ENCODE measurements at regions of chr15 and their contacts with region 1.

Region 1: GRCh38 chr15:88586401-88587162 is 34.6 kb upstream of the AEN start:
- DNase-seq: no peak
- H3K4me3 ChIP-seq: no peak overlapping the region
- H3K27ac ChIP-seq: no peak overlapping the region
- H3K4me1 ChIP-seq: no peaks in the 10 kb centered on the region
- H3K27me3 ChIP-seq: no peaks in the 10 kb centered on the region
- CTCF ChIP-seq: no peak
- EP300 ChIP-seq: no peak
- POLR2A ChIP-seq: no peak

Region 2: DNA sequence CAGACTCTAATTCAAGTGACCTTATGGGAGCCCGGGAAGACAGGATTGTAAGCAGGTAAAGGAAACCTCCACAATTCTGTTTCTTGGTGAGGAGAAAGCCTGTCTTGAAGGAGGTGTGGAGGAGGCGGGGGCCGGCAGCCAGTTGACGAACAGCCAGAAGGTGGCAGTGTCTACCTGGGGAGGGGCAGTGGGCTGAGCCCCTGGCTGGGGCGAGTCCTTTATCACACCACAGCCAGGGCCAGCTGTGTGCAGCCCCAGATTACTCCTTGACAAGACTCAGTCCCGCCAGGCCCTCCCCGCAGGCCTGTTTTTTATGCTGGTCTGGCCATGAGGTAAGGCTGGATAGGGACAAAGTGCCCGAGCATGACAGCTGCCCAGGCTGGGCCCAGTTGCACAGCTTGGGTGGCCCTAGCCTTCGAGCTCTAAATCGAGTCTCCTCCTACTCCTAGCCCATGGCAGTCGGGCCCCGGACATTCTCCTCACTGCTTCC is 1556.6 kb after region 1 on chr15:
- intact Hi-C with region 1: loop called in 1 of 4 experiments (anchors 10 kb)
- DNase-seq: peak in 3 of 5 donors; percentile 28 to 57 (median 52)
- H3K4me3 ChIP-seq: no peak overlapping the region
- H3K27ac ChIP-seq: no peak overlapping the region
- H3K4me1 ChIP-seq: peaks cover 1% of the 10 kb centered on the region
- H3K27me3 ChIP-seq: no peaks in the 10 kb centered on the region
- CTCF ChIP-seq: no peak
- EP300 ChIP-seq: no peak
- POLR2A ChIP-seq: no peak